Ovary (tissue), 10 donors: ENCODE measurements at regions of chr15 and their contacts with region 1.

Region 1: DNA sequence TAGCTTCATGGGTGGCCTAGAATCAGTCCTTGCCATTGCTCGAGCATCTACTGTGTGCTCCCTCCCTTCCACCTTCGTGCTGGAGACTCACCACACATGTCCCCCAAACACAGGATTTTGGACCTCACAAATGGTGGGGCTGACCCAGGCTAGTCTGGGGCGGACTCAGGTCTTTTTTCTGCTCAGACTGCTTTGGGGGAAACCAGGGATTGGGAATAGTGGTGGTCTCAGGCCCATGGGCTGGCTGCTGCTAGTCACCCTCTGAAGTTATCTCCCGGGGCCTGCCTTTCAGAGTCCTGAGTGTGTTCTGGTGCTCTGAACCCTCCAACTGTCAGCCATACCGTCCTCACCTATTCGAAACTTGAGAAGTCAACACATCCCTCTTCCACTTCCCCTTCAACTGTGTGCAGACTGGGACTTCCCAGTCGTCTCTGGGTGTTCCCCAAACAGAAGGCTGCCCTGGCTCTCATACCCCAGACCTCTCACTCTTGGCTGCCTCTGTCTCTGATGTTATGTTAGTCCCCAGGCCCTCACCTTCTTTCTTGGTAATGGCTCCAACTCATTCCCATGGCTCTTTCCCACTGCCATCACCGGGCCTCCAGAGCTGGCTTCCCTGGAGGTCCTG is 46.0 kb downstream of the PPCDC start:
- DNase-seq: peak in 1 of 5 donors; percentile 10
- H3K4me3 ChIP-seq: no peak overlapping the region
- H3K27ac ChIP-seq: no peak overlapping the region
- H3K4me1 ChIP-seq: peaks cover 12% of the 10 kb centered on the region
- H3K27me3 ChIP-seq: no peaks in the 10 kb centered on the region
- CTCF ChIP-seq: no peak
- EP300 ChIP-seq: no peak
- POLR2A ChIP-seq: no peak

Region 2: GRCh38 chr15:74869726-74870407 is 199.5 kb before region 1 on chr15:
- intact Hi-C with region 1: no loop called
- DNase-seq: no peak
- H3K4me3 ChIP-seq: no peak overlapping the region
- H3K27ac ChIP-seq: no peak overlapping the region
- H3K4me1 ChIP-seq: peaks cover 3% of the 10 kb centered on the region
- H3K27me3 ChIP-seq: no peaks in the 10 kb centered on the region
- CTCF ChIP-seq: no peak
- EP300 ChIP-seq: no peak
- POLR2A ChIP-seq: no peak

Region 3: GRCh38 chr15:75112848-75113492 is 43.6 kb after region 1 on chr15:
- intact Hi-C with region 1: loop called in 3 of 4 experiments (anchors 10 kb)
- DNase-seq: no peak
- H3K4me3 ChIP-seq: no peak overlapping the region
- H3K27ac ChIP-seq: no peak overlapping the region
- H3K4me1 ChIP-seq: peaks cover 2% of the 10 kb centered on the region
- H3K27me3 ChIP-seq: no peaks in the 10 kb centered on the region
- CTCF ChIP-seq: no peak
- EP300 ChIP-seq: no peak
- POLR2A ChIP-seq: no peak